Activated B cell treated with CpG ODN at 0.5 μM for 24 hours (primary cell): ENCODE measurements at regions of chr3 and their contacts with region 1.

Region 1: GRCh38 chr3:48439820-48440589 is at the starts of genes CCDC51 and TMA7:
- DNase-seq: peak; percentile 96
- ATAC-seq: peak; percentile 95
- H3K4me3 Mint-ChIP-seq: peak within 1 kb of the TSS; percentile 98
- H3K27ac Mint-ChIP-seq: peak within 1 kb of the TSS; percentile 95
- H3K4me1 Mint-ChIP-seq: peaks cover 45% of the 10 kb centered on the region
- H3K27me3 Mint-ChIP-seq: no peaks in the 10 kb centered on the region
- CTCF ChIP-seq: no peak
- total RNA-seq, gene CCDC51: 8.7 and 8.8 TPM in 2 replicates
- total RNA-seq, gene TMA7: 216 and 296 TPM in 2 replicates

Region 2: DNA sequence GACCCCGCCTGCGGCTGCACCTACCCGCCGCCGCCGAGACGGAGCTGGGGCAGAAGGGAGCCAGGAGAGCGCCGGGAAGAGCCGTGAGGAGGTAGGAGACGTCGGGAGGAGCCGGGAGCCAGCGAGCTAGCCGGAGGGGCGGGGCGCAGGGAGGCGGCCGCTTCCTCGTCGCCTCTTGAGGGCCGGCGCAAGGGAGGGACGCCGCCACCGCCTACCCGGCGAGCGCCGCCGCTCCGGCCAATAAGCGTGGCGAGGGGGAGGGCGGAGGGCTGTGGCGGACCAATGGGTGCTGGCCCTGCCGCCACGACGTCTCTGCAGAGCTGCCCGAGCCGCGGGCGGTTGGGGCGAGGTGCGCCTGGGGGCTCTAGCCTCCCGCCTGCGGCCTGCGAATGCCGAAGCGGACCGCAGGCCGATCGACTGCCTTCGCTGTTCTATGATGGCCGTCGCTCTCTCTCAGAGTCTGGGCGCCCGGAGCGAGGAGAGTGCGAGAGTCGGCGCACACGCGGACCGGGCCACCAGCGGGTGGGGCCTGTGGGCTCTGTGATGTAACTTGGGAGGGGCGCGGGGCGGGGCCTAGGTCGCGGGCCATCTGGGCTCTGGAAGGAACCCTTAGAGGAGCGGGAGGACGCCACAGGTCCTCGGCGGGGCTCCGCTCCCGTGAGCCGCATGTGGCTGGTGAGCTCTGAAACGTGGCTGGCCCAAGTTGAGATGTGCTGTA is 351.1 kb before region 1 on chr3:
- CTCF ChIA-PET with region 1: no interaction called
- POLR2A ChIA-PET with region 1: no interaction called
- intact Hi-C with region 1: loop called (anchors 10 kb)
- DNase-seq: peak; percentile 95
- ATAC-seq: peak; percentile 92
- H3K4me3 Mint-ChIP-seq: peak overlapping the region; percentile 97
- H3K27ac Mint-ChIP-seq: peak overlapping the region; percentile 97
- H3K4me1 Mint-ChIP-seq: peaks cover 29% of the 10 kb centered on the region
- H3K27me3 Mint-ChIP-seq: no peaks in the 10 kb centered on the region
- CTCF ChIP-seq: no peak

Region 3: DNA sequence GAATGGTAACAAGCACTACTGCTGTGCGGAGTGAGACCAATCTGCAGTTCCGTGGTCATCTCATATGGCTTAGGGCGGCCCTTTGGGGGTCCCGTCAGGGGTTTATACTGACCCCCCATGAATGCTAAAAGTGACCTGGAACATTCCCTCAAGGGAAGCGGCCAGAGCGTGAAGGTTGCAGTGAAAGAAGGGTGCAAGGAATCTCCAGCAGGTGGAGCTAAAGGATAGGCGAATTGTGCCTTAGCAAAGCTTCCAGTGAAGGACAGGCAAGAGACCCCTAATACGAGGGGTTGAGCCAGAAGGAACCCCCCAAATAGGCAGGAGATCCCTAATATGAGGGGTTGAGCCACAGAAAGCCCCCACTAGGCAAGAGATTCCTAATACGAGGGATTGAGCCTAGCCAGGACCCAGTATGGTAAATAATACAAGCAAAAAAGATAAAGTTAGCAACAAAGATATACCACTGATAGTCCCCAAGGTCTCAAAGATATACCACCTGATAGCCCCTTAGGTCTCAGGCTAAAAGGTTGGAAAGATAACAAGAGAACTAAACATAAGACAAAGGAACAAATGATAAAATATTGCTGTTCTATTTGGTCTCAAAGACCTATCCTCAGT is 166.3 kb before region 1 on chr3:
- CTCF ChIA-PET with region 1: interaction called, 109 read pairs
- POLR2A ChIA-PET with region 1: interaction called, 4 read pairs
- intact Hi-C with region 1: loop called (anchors 1 kb)
- DNase-seq: peak; percentile 31
- ATAC-seq: peak; percentile 67
- H3K4me3 Mint-ChIP-seq: no peak overlapping the region
- H3K27ac Mint-ChIP-seq: no peak overlapping the region
- H3K4me1 Mint-ChIP-seq: no peaks in the 10 kb centered on the region
- H3K27me3 Mint-ChIP-seq: no peaks in the 10 kb centered on the region
- CTCF ChIP-seq: no peak

Region 4: DNA sequence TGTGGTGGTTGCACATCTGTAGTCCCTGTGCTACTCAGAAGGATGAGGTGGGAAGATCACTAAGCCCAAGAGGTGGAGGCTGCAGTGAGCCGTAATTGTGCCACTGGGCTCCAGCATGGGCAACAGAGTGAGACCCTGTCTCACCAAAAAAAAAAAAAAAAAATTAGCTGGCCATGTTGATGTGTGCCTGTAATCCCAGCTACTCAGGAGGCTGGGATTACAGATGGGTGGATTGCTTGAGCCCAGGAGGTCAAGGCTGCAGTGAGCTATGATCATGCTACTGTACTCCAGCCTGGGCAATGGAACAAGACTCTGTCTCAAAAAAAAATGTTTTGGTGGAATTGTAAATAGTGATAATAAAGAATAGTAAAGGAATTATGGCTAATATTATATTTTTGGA is 16.5 kb after region 1 on chr3:
- CTCF ChIA-PET with region 1: interaction called, 20 read pairs
- POLR2A ChIA-PET with region 1: interaction called, 7 read pairs
- intact Hi-C with region 1: no loop called
- DNase-seq: no peak
- ATAC-seq: no peak
- H3K4me3 Mint-ChIP-seq: no peak overlapping the region
- H3K27ac Mint-ChIP-seq: no peak overlapping the region
- H3K4me1 Mint-ChIP-seq: no peaks in the 10 kb centered on the region
- H3K27me3 Mint-ChIP-seq: no peaks in the 10 kb centered on the region
- CTCF ChIP-seq: no peak

Region 5: DNA sequence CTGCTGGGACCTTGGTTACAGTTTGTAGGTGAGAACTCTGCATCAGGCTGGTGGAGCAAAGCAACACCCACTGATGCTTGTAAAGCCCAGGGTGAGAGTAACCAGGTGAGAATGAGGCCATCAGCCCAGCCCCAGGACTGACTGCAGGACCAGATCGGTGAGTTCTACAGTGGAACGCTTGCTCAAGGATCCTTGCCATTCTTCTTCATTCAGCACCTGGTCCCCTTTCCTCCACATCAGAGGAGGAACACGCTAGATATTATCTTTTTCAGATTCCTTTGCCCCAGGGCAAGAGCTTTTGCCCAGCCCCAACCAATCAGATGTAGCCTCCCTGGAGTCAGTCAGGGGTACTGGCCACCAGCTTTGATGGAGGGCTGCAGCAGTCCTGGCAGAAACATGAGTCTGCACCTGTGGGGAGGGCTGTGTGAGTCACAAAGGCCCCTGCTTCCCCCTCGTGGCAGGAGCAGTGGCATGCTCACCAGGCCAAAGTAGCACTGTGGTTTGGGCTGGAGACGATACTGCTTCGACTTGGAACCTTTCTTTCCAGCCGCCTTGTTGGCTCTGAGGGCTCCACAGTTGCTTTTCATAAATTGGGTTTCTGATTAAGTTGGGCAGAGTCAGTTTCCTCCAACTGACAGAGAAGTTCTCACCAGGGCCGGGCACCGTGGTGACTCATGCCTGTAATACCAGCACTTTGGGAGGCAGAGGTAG is 67.5 kb after region 1 on chr3:
- CTCF ChIA-PET with region 1: interaction called, 31 read pairs
- POLR2A ChIA-PET with region 1: interaction called, 6 read pairs
- intact Hi-C with region 1: loop called (anchors 1 kb)
- DNase-seq: peak; percentile 56
- ATAC-seq: peak; percentile 88
- H3K4me3 Mint-ChIP-seq: peak overlapping the region; percentile 24
- H3K27ac Mint-ChIP-seq: no peak overlapping the region
- H3K4me1 Mint-ChIP-seq: peaks cover 15% of the 10 kb centered on the region
- H3K27me3 Mint-ChIP-seq: no peaks in the 10 kb centered on the region
- CTCF ChIP-seq: peak; percentile 28